Naive thymus-derived CD4-positive, alpha-beta T cell (primary cell): ENCODE measurements at regions of chr20 and their contacts with region 1.

Region 1: GRCh38 chr20:63641792-63642544 is 11.3 kb downstream of the STMN3 start:
- DNase-seq: peak; percentile 94 to 98 (median 97)
- ATAC-seq: peak; percentile 86
- H3K4me3 ChIP-seq: peak overlapping the region; percentile 89
- H3K4me3 Mint-ChIP-seq: peak overlapping the region; percentile 57 to 92 (median 76)
- H3K27ac ChIP-seq: peak overlapping the region; percentile 90
- H3K27ac Mint-ChIP-seq: peak overlapping the region; percentile 66 to 98 (median 85)
- H3K4me1 ChIP-seq: peaks cover 23 to 24% of the 10 kb centered on the region in 2 donors
- H3K4me1 Mint-ChIP-seq: peaks cover 16 to 41% (median 28%) of the 10 kb centered on the region in 7 donors
- H3K27me3 ChIP-seq: no peaks in the 10 kb centered on the region
- H3K27me3 Mint-ChIP-seq: peaks cover 0 to 2% (median 0%) of the 10 kb centered on the region in 5 donors

Region 2: DNA sequence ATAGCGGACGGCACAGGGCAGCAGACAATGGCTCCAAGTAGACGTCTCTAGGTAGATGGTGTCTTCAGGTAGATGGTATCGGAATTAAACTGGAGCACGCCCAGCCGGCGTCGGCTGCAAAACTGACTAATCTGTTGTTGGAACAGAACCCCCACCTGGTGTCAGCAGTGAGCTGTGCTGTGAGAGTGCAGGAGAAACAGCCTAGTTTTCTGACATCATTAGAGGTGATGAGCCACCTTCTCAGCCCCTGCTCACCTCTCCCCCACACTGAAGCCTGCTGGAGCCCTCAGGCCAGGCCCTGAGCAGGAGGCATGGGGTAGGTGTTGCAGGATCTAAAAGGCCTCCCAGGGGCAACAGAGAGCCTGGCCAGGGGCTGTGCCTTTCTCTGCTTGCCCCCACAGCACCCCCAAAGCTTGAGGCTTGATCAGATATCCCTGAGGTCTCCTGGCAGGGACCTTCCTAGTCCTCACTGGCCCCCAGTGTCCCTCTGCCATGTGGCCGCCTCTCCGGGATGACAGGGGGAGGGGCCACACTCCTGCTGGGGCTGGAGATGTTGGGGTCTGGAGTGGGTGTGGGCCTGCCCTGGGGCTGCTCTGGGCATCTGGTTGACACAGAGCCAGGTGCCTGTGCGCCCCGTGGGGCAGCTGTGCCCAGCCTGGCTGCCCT is 61.0 kb before region 1 on chr20:
- CTCF ChIA-PET with region 1: interaction called, 4 read pairs
- POLR2A ChIA-PET with region 1: interaction called, 5 read pairs
- intact Hi-C with region 1: loop called (anchors 1 to 2 kb)
- DNase-seq: peak; percentile 30 to 87 (median 81)
- ATAC-seq: peak; percentile 96
- H3K4me3 ChIP-seq: no peak overlapping the region
- H3K4me3 Mint-ChIP-seq: peak overlapping the region in 1 of 10 donors; percentile 17
- H3K27ac ChIP-seq: no peak overlapping the region
- H3K27ac Mint-ChIP-seq: peak overlapping the region in 1 of 9 donors; percentile 74
- H3K4me1 ChIP-seq: peaks cover 0 to 10% of the 10 kb centered on the region in 2 donors
- H3K4me1 Mint-ChIP-seq: peaks cover 0 to 17% (median 14%) of the 10 kb centered on the region in 7 donors
- H3K27me3 ChIP-seq: no peaks in the 10 kb centered on the region
- H3K27me3 Mint-ChIP-seq: peaks cover 0 to 42% (median 0%) of the 10 kb centered on the region in 5 donors

Region 3: GRCh38 chr20:63627129-63627750 is 14.7 kb before region 1 on chr20:
- CTCF ChIA-PET with region 1: interaction called, 13 read pairs
- POLR2A ChIA-PET with region 1: interaction called, 552 read pairs
- intact Hi-C with region 1: loop called (anchors 1 kb)
- DNase-seq: peak; percentile 74 to 99 (median 97)
- ATAC-seq: peak; percentile 93
- H3K4me3 ChIP-seq: peak overlapping the region; percentile 96
- H3K4me3 Mint-ChIP-seq: peak overlapping the region; percentile 93 to 99 (median 98)
- H3K27ac ChIP-seq: peak overlapping the region; percentile 85
- H3K27ac Mint-ChIP-seq: peak overlapping the region; percentile 79 to 98 (median 95)
- H3K4me1 ChIP-seq: peaks cover 29 to 40% of the 10 kb centered on the region in 2 donors
- H3K4me1 Mint-ChIP-seq: peaks cover 28 to 64% (median 42%) of the 10 kb centered on the region in 7 donors
- H3K27me3 ChIP-seq: no peaks in the 10 kb centered on the region
- H3K27me3 Mint-ChIP-seq: no peaks in the 10 kb centered on the region

Region 4: GRCh38 chr20:63739130-63740069 is 97.4 kb after region 1 on chr20 and contains the start of gene SLC2A4RG:
- CTCF ChIA-PET with region 1: no interaction called
- POLR2A ChIA-PET with region 1: interaction called, 17 read pairs
- intact Hi-C with region 1: loop called in 1 of 2 experiments (anchors 5 kb)
- DNase-seq: peak; percentile 49 to 86 (median 69)
- ATAC-seq: peak; percentile 62
- H3K4me3 ChIP-seq: peak within 1 kb of the TSS; percentile 99
- H3K4me3 Mint-ChIP-seq: peak within 1 kb of the TSS; percentile 33 to 92 (median 80)
- H3K27ac ChIP-seq: peak within 1 kb of the TSS; percentile 71
- H3K27ac Mint-ChIP-seq: peak within 1 kb of the TSS in 1 of 9 donors; percentile 38
- H3K4me1 ChIP-seq: peaks cover 21 to 29% of the 10 kb centered on the region in 2 donors
- H3K4me1 Mint-ChIP-seq: peaks cover 7 to 20% (median 16%) of the 10 kb centered on the region in 7 donors
- H3K27me3 ChIP-seq: no peaks in the 10 kb centered on the region
- H3K27me3 Mint-ChIP-seq: no peaks in the 10 kb centered on the region
- total RNA-seq, gene SLC2A4RG: 88.7 to 136 (median 111) TPM